Stomach (tissue), 19 donors: ENCODE measurements at regions of chr12 and their contacts with region 1.

Region 1: DNA sequence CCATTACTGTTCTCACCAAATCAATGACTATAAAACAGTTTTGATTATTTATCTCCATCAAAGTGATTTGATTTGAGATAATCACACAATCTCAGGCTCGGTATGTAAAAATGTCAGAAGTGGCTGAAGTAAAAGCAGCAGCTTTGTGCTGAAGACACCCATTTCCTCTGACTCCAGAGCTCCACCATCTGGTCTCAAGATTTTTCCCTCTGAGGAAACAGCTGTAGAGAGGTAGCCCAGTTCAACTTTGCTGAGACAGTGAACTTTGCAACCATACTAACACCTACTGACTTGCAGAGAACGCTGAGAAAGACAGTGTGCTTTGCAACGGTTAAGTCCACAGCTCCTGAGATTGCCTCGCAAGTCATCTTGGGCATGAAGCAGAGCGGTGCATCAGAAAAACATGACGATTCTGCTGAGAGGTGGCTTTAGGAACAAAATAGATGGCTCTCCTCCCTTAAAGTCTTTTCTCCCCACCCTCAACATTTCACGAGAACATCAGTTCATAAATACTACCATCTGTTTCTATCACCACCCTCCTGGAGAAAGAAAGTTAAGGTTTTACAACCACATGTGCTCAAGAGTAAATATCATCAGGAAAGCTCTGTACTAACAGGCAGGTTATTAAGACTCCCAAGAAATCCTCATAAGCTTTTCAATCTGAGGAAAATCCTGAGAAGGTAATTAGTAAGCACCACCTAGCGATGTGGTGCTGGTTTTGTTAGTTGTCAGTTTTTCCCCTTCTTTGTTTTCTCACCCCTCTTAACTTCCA is 34.8 kb downstream of the HIGD1C start:
- DNase-seq: peak; percentile 49 to 86
- H3K4me3 ChIP-seq: no peak overlapping the region
- H3K27ac ChIP-seq: peak overlapping the region in 3 of 5 donors; percentile 4 to 55 (median 29)
- H3K4me1 ChIP-seq: peaks cover 7 to 35% (median 24%) of the 10 kb centered on the region in 4 donors
- H3K27me3 ChIP-seq: no peaks in the 10 kb centered on the region
- CTCF ChIP-seq: peak in 5 of 7 experiments; percentile 23 to 65 (median 35)
- EP300 ChIP-seq: no peak
- POLR2A ChIP-seq: no peak

Region 2: DNA sequence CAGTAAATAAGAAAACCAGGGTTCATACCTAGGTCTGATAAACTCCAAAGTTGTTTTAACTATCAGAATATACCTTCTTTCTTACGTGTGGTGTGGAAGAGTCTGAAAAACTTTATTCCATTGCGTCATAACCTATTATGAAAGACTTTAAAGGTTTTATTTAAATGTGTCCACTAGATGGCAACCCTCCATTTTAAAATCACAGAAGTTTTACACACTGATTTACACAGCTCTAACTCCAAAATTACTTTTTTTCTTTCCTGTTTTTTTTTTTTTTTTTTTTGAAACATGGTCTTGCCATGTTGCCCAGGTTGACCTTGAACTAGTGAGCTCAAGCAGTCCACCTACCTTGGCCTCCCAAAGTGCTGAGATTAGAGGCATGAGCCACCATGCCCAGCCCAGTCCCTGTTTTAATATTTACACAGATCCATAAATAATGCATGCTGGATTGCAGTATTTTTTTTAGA is 161.7 kb before region 1 on chr12:
- intact Hi-C with region 1: loop called (anchors 5 kb)
- DNase-seq: peak in 1 of 2 donors; percentile 87
- H3K4me3 ChIP-seq: no peak overlapping the region
- H3K27ac ChIP-seq: peak overlapping the region in 4 of 5 donors; percentile 26 to 77 (median 46)
- H3K4me1 ChIP-seq: peaks cover 0 to 14% (median 8%) of the 10 kb centered on the region in 4 donors
- H3K27me3 ChIP-seq: no peaks in the 10 kb centered on the region
- CTCF ChIP-seq: peak in 4 of 7 experiments; percentile 32 to 65 (median 55)
- EP300 ChIP-seq: no peak
- POLR2A ChIP-seq: no peak

Region 3: GRCh38 chr12:51150777-51151176 is 163.6 kb after region 1 on chr12:
- intact Hi-C with region 1: no loop called
- DNase-seq: no peak
- H3K4me3 ChIP-seq: no peak overlapping the region
- H3K27ac ChIP-seq: no peak overlapping the region
- H3K4me1 ChIP-seq: peaks cover 0 to 16% (median 4%) of the 10 kb centered on the region in 4 donors
- H3K27me3 ChIP-seq: no peaks in the 10 kb centered on the region
- CTCF ChIP-seq: no peak
- EP300 ChIP-seq: no peak
- POLR2A ChIP-seq: no peak